Activated CD8-positive, alpha-beta T cell treated with anti-CD3 and anti-CD28 coated beads, Interleukin-2, amount 10 ng/mL, durations not matched to agents 7 days and 5 days (primary cell): ENCODE measurements at regions of chr17 and their contacts with region 1.

Region 1: GRCh38 chr17:27601069-27601975 is 29.7 kb upstream of the LGALS9 start:
- DNase-seq: peak; percentile 88
- ATAC-seq: peak; percentile 31
- H3K4me3 Mint-ChIP-seq: no peak overlapping the region
- H3K27ac Mint-ChIP-seq: no peak overlapping the region
- H3K4me1 Mint-ChIP-seq: peaks cover 16% of the 10 kb centered on the region
- H3K27me3 Mint-ChIP-seq: no peaks in the 10 kb centered on the region

Region 2: GRCh38 chr17:27332485-27333409 is 268.6 kb before region 1 on chr17:
- CTCF ChIA-PET with region 1: interaction called, 25 read pairs
- POLR2A ChIA-PET with region 1: no interaction called
- DNase-seq: peak; percentile 92
- ATAC-seq: peak; percentile 98
- H3K4me3 Mint-ChIP-seq: peak overlapping the region; percentile 66
- H3K27ac Mint-ChIP-seq: peak overlapping the region; percentile 75
- H3K4me1 Mint-ChIP-seq: peaks cover 21% of the 10 kb centered on the region
- H3K27me3 Mint-ChIP-seq: no peaks in the 10 kb centered on the region

Region 3: DNA sequence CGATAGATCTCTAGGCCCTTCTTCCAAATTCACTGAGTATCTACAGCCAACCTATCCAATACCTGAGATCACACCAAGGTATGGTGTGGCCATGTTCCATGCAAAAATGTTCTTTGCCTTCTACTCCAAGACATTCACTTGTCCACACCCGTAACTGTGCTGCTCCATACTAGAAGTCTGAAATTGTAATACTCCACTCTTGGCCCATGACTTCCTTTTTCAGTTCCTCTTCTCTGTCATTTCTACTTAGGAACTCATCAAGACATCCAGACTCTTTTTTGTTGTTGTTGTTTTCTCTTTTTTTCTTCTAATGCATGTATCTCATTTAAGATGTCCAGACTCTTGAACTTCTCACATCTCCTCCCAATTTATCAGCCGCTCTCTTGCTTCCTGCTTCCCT is 187.5 kb before region 1 on chr17:
- CTCF ChIA-PET with region 1: interaction called, 28 read pairs
- POLR2A ChIA-PET with region 1: no interaction called
- DNase-seq: no peak
- ATAC-seq: no peak
- H3K4me3 Mint-ChIP-seq: no peak overlapping the region
- H3K27ac Mint-ChIP-seq: no peak overlapping the region
- H3K4me1 Mint-ChIP-seq: no peaks in the 10 kb centered on the region
- H3K27me3 Mint-ChIP-seq: peaks cover 9% of the 10 kb centered on the region

Region 4: GRCh38 chr17:27473748-27474609 is 127.3 kb before region 1 on chr17:
- CTCF ChIA-PET with region 1: interaction called, 36 read pairs
- POLR2A ChIA-PET with region 1: no interaction called
- DNase-seq: peak; percentile 85
- ATAC-seq: peak; percentile 50
- H3K4me3 Mint-ChIP-seq: peak overlapping the region; percentile 69
- H3K27ac Mint-ChIP-seq: peak overlapping the region; percentile 98
- H3K4me1 Mint-ChIP-seq: peaks cover 96% of the 10 kb centered on the region
- H3K27me3 Mint-ChIP-seq: no peaks in the 10 kb centered on the region

Region 5: DNA sequence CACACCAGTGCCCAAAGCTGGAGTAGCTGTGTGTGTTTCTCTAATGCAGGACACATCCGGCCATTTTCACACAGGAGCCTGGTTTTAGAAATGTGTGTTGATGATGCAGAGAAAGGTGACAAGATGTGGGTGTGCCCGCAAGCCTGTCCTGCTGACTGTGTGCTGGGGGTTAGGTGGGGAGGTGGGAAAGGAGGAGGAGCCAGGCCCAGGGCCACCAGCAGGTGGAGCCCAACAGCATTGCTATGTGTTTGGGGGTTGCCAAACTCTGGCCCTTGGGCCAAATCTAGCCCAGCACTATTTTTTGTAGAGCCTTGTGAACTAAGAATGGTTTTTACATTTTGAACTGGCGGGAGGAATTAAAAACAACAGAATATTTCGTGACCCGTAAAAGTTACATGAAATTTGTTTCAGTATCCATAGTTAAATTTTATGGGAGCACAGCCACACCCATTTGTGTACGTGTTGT is 32.0 kb before region 1 on chr17:
- CTCF ChIA-PET with region 1: interaction called, 37 read pairs
- POLR2A ChIA-PET with region 1: no interaction called
- DNase-seq: peak; percentile 71
- ATAC-seq: peak; percentile 74
- H3K4me3 Mint-ChIP-seq: no peak overlapping the region
- H3K27ac Mint-ChIP-seq: peak overlapping the region; percentile 63
- H3K4me1 Mint-ChIP-seq: peaks cover 73% of the 10 kb centered on the region
- H3K27me3 Mint-ChIP-seq: no peaks in the 10 kb centered on the region